ENCODE measurements at regions of chr2 and their contacts with region 1.

Region 1: DNA sequence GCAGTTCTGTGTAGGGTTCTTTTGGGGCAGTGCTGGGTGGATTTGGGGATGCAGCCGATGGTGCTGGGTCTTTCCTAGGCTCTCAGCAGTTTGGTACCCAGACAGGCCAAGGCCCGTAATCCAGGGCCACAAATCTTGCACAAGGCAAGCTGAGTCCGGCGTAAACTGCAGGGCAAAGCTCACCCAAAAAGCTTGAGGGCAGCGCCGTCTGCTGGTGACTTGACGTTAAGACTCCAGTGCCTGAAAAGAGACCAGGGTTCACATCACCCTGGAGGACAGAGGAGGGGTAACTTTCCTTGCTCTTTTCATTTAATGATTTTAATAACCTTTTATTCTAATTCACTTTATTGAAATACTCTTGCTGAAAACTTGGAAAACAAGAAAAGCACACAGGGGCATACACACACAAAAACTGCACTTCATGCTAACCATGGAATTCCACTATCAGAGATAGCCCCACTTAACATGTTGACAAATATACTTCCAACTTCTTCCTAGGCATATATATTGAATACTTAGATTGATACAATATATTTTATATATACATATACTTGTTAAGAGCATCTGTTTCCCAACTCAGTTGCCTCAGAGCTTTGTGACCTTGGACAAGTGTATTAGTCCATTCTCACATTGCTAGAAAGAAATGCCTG is 38.9 kb downstream of the CNGA3 start:
- DNase-seq: peak; percentile 76 to 87 (median 85)
- ATAC-seq: peak; percentile 80 to 85
- H3K4me3 ChIP-seq: no peak overlapping the region
- H3K27ac ChIP-seq: no peak overlapping the region
- H3K4me1 ChIP-seq: no peaks in the 10 kb centered on the region
- H3K27me3 ChIP-seq: no peaks in the 10 kb centered on the region

Region 2: DNA sequence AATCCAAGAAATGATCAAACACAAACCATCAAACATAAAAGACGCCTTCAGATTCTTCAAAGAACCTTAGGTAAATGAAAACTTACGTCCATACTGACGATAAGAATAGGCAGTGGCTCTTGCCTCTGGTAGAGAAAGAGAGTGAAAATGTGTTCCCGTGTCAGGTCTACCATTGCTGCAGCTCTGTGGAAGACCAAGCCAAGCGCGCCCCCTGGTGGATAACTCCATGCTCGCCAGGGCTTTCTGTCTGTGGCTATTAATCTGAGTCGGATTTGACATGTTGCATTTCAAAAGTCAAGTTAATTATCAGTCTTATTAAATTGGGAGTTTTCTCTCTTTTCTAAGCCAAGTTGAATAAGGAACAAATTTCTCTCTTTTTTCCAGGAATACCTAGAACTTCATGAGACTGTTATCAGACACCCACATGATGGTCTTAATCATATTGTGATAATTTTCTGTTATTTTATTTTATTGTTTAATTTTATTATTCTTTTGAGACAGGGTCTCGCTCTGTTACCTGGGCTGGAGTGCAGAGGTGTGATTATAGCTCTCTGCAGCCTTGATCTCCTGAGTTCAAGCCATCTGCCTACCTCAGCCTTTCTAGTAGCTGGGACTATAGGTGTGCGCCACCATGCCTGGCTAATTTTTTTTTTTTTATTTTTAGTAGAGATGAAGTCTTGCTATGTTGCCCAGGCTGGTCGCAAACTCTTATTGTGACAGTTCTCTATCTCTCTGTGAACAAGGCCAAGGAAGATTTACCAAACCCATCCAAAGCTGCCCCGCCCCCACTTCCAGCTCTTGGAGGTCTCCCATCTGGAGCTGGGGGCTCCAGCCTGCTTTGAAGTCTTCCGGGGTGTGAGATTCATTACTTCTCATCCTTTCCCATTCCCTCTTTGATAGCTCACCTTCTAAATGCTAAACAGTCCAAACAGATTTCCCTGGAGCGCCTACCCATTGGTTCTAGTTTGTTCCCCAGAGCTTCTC is 687.6 kb before region 1 on chr2:
- intact Hi-C with region 1: loop called in 3 of 4 experiments (anchors 5 to 10 kb)
- DNase-seq: peak; percentile 87 to 97 (median 95)
- ATAC-seq: peak; percentile 89 to 90
- H3K4me3 ChIP-seq: no peak overlapping the region
- H3K27ac ChIP-seq: no peak overlapping the region
- H3K4me1 ChIP-seq: no peaks in the 10 kb centered on the region
- H3K27me3 ChIP-seq: no peaks in the 10 kb centered on the region

Region 3: GRCh38 chr2:97995734-97996624 is 389.2 kb before region 1 on chr2 and contains the start of gene TMEM131:
- intact Hi-C with region 1: loop called in 1 of 4 experiments (anchors 10 kb)
- DNase-seq: peak; percentile 96 to 98 (median 98)
- ATAC-seq: peak; percentile 98
- H3K4me3 ChIP-seq: peak within 1 kb of the TSS; percentile 85
- H3K27ac ChIP-seq: peak within 1 kb of the TSS; percentile 82
- H3K4me1 ChIP-seq: no peaks in the 10 kb centered on the region
- H3K27me3 ChIP-seq: no peaks in the 10 kb centered on the region
- total RNA-seq, gene TMEM131: 26.4 to 32.7 (median 30.2) TPM